ENCODE measurements at regions of chr2 and their contacts with region 1.

Region 1: GRCh38 chr2:29347774-29348461 is 232.7 kb downstream of the CLIP4 start:
- DNase-seq: no peak
- CTCF ChIP-seq: no peak

Region 2: DNA sequence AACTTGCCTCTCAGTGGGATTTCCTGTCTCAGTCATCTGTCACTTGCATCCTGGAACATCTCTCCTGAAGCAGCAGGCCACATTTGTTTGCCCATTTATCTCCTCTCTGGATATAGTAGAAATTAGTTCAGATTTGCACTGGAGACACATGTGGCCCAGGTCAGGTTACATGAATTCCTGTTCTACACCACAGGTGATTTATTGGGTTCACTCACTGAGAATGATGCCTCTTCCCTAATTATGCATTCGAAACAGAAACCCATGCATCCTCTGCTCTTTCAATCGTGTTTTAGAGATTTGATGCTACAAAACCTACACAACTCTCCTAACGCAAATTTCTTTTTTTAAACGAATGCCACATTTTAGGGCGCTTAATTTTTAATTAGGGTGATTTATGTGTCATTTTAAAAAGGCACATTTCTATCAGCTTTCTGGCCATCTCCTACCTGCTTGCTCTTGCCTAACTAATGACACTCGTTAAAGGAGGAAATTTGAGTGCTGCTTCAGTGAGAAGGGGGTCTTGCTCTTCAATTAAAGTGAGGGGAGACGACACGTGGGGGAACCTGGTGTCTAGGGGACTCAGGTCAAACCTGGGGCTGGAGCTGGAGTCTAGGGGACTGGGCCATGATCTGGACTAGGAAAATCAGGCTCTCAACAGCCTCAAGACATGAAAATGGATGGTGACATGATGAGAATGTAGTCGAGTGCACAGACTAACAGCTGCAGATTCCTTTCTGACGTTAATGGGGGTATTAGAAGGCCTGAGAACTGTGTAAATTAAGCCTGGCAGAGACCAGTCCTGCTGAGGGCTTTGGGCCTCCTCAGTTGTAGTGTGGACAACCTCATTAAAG is 11.3 kb before region 1 on chr2:
- CTCF ChIA-PET with region 1: interaction called, 10 read pairs
- POLR2A ChIA-PET with region 1: no interaction called
- DNase-seq: no peak
- CTCF ChIP-seq: no peak

Region 3: GRCh38 chr2:29463181-29463900 is 115.4 kb after region 1 on chr2:
- CTCF ChIA-PET with region 1: no interaction called
- POLR2A ChIA-PET with region 1: no interaction called
- DNase-seq: no peak
- CTCF ChIP-seq: no peak

Region 4: GRCh38 chr2:29700560-29700959 is 352.6 kb after region 1 on chr2:
- CTCF ChIA-PET with region 1: no interaction called
- POLR2A ChIA-PET with region 1: no interaction called
- DNase-seq: no peak
- CTCF ChIP-seq: no peak